Gastrocnemius medialis (tissue), 4 donors: ENCODE measurements at regions of chr12 and their contacts with region 1.

Region 1: GRCh38 chr12:32780071-32780470 is 24.4 kb upstream of the YARS2 start:
- DNase-seq: no peak
- ATAC-seq: no peak
- H3K4me3 ChIP-seq: no peak overlapping the region
- H3K27ac ChIP-seq: no peak overlapping the region
- H3K4me1 ChIP-seq: no peaks in the 10 kb centered on the region
- H3K27me3 ChIP-seq: no peaks in the 10 kb centered on the region
- CTCF ChIP-seq: no peak
- POLR2A ChIP-seq: no peak

Region 2: DNA sequence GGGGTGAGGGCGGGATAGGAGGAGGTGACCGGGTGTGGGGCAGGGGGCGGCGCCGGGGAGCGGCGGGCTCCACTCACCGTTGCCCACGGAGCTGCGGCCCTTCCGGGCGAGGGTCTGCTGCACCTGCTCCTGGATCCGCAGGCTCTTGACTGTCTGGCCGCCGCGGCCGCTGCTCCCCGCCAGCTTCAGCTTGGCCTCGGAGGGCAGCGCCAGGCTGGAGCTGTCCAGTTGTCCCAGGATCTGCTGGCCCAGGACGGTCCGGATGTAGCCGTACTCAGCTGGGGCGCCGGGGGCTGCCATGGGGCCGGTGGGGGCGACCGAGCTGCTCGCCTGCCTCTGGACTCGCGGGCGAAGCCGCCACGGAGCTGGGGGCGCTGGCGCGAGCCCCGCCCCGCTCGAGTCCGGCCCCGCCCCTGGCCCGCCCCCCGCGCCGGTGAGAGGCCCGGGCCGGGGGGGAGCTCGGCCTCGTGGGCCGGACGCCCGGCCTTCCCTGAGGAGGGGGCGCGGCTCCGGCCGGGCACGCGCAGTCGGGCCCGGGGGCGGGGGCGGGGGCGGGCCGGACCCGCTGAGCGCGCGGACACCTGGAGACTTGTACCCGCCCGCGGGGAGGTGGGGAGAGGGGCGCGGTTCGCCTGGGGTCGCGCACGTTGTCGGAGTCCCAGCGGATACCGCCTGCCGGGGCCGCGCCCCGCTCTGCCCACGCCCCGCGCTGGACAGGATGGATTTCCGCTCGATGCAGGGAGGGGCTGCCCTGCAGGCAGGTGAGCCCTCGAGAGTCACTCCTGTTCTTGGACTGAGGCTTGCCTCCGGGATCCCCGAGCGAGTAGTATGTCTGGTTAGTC is 116.6 kb after region 1 on chr12 and contains the start of gene PKP2:
- in situ Hi-C with region 1: loop called in 1 of 4 experiments (anchors 25 kb)
- intact Hi-C with region 1: no loop called
- DNase-seq: peak in 1 of 2 donors; percentile 19
- ATAC-seq: peak; percentile 66 to 76
- H3K4me3 ChIP-seq: peak within 1 kb of the TSS; percentile 56 to 66 (median 63)
- H3K27ac ChIP-seq: peak within 1 kb of the TSS in 2 of 4 donors; percentile 31 to 49
- H3K4me1 ChIP-seq: no peaks in the 10 kb centered on the region
- H3K27me3 ChIP-seq: peaks cover 15 to 25% (median 23%) of the 10 kb centered on the region in 3 donors
- CTCF ChIP-seq: no peak
- POLR2A ChIP-seq: peak in 1 of 2 donors; percentile 8
- total RNA-seq, gene PKP2: 3.5 to 7.2 (median 4.1) TPM